Dendritic cell treated with granulocyte-macrophage colony-stimulating factor and Interleukin-4, amounts not matched to agents 40 ng/mL and 50 ng/mL, for 4 days (primary cell): ENCODE measurements at regions of chr12 and their contacts with region 1.

Region 1: GRCh38 chr12:81644503-81644902 is 114.6 kb downstream of the PPFIA2 start:
- H3K4me3 Mint-ChIP-seq: no peak overlapping the region
- H3K27ac Mint-ChIP-seq: no peak overlapping the region
- H3K4me1 Mint-ChIP-seq: no peaks in the 10 kb centered on the region
- H3K27me3 Mint-ChIP-seq: no peaks in the 10 kb centered on the region

Region 2: GRCh38 chr12:81992461-81992860 is 348.0 kb after region 1 on chr12:
- intact Hi-C with region 1: loop called (anchors 1 kb)
- H3K4me3 Mint-ChIP-seq: no peak overlapping the region
- H3K27ac Mint-ChIP-seq: no peak overlapping the region
- H3K4me1 Mint-ChIP-seq: no peaks in the 10 kb centered on the region
- H3K27me3 Mint-ChIP-seq: peaks cover 7% of the 10 kb centered on the region

Region 3: DNA sequence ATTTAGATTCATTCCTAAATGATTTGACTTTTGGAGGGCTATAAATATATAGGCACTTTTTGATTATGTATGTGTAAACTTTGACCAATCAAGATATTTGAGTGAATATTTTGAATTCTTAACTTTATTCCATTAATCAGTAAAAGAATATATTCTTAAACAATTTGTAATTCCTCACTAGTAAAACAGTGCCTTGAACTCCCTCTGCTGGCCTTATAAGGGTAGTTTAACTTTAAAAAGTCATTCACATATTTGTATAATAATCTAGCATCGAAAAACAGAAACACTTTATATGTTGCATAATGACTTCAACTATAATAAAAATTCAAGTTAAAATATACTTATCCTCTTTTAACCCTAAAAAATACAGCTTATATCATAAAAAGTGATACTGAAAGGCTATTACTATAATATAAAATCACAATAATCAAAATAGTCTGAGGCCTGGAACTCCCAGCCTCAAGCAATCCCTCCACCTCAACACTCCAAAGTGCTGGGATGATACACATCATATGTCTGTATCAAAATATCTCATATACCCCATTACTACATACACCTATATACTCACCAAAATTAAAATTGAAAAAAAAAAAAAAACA is 682.5 kb after region 1 on chr12:
- intact Hi-C with region 1: loop called (anchors 2 kb)
- H3K4me3 Mint-ChIP-seq: no peak overlapping the region
- H3K27ac Mint-ChIP-seq: no peak overlapping the region
- H3K4me1 Mint-ChIP-seq: no peaks in the 10 kb centered on the region
- H3K27me3 Mint-ChIP-seq: no peaks in the 10 kb centered on the region